SK-MEL-5 (cell line): ENCODE measurements at regions of chr12 and their contacts with region 1.

Region 1: DNA sequence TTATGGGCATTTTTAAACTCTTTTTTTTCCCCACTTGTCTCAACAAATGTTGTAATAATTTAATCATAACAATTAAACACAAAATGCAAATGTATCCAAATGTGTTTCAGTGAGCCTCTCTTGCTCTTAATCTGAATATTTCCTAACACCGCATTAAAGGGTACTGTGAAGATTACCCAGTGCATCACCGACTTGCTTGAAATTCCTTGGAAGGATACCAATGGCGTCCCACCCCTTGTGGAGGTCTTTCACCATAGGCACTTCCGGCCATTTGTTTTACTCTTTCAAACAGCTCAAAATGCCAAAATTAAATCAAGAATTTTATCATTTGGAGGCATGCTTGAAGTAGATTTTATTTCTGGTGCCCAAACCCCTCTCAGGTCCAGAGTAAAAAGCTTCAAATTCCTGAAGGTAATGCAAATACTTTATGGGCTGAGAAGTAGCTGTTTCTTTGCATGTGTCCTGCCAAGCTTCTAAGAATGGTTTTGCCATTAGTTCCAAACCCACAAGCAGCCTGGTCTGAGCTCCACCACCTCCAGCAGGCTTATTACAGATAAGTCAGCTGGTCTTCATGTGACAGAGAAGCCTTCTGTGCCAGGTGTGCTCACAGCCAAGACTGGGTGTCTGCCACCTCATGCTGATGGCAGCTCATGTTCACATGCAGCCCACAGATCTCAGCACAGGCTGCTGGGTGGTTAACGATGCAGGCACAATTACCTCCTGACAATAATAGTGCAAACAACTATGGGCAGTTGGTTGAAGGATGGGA is 16.4 kb upstream of the NUDT4 start:
- DNase-seq: peak; percentile 31

Region 2: GRCh38 chr12:93297032-93297431 is 64.3 kb before region 1 on chr12:
- in situ Hi-C with region 1: loop called (anchors 10 kb)
- DNase-seq: no peak